HCT116 (cell line): ENCODE measurements at regions of chr3 and their contacts with region 1.

Region 1: GRCh38 chr3:159988617-159989271 is at the start of gene IL12A:
- DNase-seq: peak; percentile 52
- ATAC-seq: peak; percentile 95
- H3K4me3 ChIP-seq: peak within 1 kb of the TSS; percentile 69 to 73
- H3K27ac ChIP-seq: no peak within 1 kb of the TSS; the same call in 1 of the 2 replicates
- H3K4me1 ChIP-seq: peaks cover 4 to 24% of the 10 kb centered on the region in 2 experiments; a peak in 3 of 4 replicates
- H3K27me3 ChIP-seq: no peaks in the 10 kb centered on the region
- CTCF ChIP-seq: peak; percentile 74 to 95 (median 93); a peak in 5 of 6 replicates
- POLR2A ChIP-seq: no peak
- RAD21 ChIP-seq: peak; percentile 56
- total RNA-seq, gene IL12A: 2.8 TPM

Region 2: DNA sequence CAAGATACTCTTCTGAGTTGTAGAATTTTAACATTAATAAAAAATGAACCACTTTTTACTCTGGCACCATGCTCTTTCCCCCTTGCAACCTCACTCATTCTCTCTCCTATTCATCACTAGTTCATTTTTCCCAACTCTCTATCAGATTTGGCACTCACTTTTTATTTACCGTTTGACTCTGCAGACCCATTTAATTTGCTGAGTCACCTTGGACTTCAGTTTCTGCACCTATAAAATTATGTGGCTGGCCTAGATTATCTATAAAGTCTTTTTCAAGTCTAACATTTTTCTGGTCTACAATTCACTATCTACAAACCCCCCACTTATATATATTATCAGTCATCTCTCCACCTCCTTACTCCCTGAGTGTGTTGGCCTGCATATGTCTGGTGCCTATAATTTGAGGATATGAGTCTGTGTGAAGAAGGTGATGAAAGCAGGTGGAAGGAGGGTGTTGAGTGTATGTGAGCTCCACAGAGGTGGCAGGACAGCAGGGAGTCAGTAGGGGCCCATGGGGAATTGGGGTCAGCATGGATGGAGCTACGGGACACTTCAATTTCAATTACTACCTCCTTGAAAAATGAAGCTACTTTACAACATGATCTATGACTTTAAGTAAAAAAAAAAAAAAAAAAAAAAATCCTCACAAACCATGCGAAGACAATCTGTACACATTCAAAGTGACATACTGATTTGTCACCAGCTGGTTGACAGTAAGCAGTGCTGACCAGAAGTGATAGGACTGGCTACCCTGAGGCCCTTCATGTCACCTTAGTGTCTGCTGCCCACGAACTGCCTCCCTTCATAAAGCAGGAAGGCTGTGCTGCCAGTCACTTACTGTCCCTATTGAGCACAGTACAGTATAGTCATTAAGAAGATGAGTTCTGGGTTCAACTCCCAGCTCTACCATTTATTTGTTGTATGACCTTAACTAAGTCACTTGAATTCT is 334.3 kb before region 1 on chr3:
- CTCF ChIA-PET with region 1: no interaction called
- POLR2A ChIA-PET with region 1: no interaction called
- RAD21 ChIA-PET with region 1: no interaction called
- intact Hi-C with region 1: no loop called
- DNase-seq: no peak
- ATAC-seq: no peak
- H3K4me3 ChIP-seq: no peak overlapping the region
- H3K27ac ChIP-seq: no peak overlapping the region
- H3K4me1 ChIP-seq: no peaks in the 10 kb centered on the region
- H3K27me3 ChIP-seq: no peaks in the 10 kb centered on the region
- CTCF ChIP-seq: no peak
- POLR2A ChIP-seq: no peak
- RAD21 ChIP-seq: no peak

Region 3: GRCh38 chr3:159751146-159751545 is 237.6 kb before region 1 on chr3:
- CTCF ChIA-PET with region 1: no interaction called
- POLR2A ChIA-PET with region 1: no interaction called
- RAD21 ChIA-PET with region 1: no interaction called
- intact Hi-C with region 1: no loop called
- DNase-seq: no peak
- ATAC-seq: no peak
- H3K4me3 ChIP-seq: no peak overlapping the region
- H3K27ac ChIP-seq: no peak overlapping the region
- H3K4me1 ChIP-seq: no peaks in the 10 kb centered on the region
- H3K27me3 ChIP-seq: no peaks in the 10 kb centered on the region
- CTCF ChIP-seq: no peak
- POLR2A ChIP-seq: no peak
- RAD21 ChIP-seq: no peak

Region 4: DNA sequence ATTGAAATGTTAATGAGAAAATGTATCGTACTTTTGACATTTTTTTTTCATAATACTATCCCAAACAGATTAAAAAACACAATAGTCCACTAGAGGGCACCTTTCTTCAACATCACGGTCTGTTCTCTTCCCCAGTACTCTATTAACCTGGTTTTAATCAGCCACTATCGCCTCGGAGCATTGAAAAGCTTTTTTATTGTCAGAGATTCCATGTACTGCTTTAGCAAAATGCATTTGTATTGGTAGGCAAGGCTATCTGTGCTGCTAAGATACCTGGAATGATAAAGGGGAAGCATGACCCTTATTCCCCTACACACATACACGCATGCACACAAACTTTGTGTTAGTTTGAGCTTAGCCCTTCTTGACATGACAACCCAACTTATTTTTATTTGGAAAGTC is 160.2 kb before region 1 on chr3:
- CTCF ChIA-PET with region 1: interaction called, 18 read pairs
- POLR2A ChIA-PET with region 1: no interaction called
- RAD21 ChIA-PET with region 1: no interaction called
- intact Hi-C with region 1: no loop called
- DNase-seq: peak; percentile 35
- ATAC-seq: peak; percentile 74
- H3K4me3 ChIP-seq: no peak overlapping the region
- H3K27ac ChIP-seq: no peak overlapping the region
- H3K4me1 ChIP-seq: peaks cover 30 to 39% of the 10 kb centered on the region in 2 experiments
- H3K27me3 ChIP-seq: no peaks in the 10 kb centered on the region
- CTCF ChIP-seq: peak; percentile 36 to 68 (median 55); a peak in 4 of 6 replicates
- POLR2A ChIP-seq: no peak
- RAD21 ChIP-seq: peak; percentile 70

Region 5: GRCh38 chr3:159884661-159885402 is 103.9 kb before region 1 on chr3:
- CTCF ChIA-PET with region 1: interaction called, 51 read pairs
- POLR2A ChIA-PET with region 1: interaction called, 3 read pairs
- RAD21 ChIA-PET with region 1: interaction called in 1 of 2 experiments, 3 read pairs
- intact Hi-C with region 1: loop called (anchors 5 kb)
- DNase-seq: no peak
- ATAC-seq: peak; percentile 86
- H3K4me3 ChIP-seq: no peak overlapping the region
- H3K27ac ChIP-seq: no peak overlapping the region
- H3K4me1 ChIP-seq: peaks cover 0 to 9% of the 10 kb centered on the region in 2 experiments; a peak in 2 of 4 replicates
- H3K27me3 ChIP-seq: no peaks in the 10 kb centered on the region
- CTCF ChIP-seq: peak; percentile 46 to 62 (median 59); a peak in 5 of 6 replicates
- POLR2A ChIP-seq: no peak
- RAD21 ChIP-seq: peak; percentile 73

Region 6: GRCh38 chr3:159929435-159930141 is 59.2 kb before region 1 on chr3:
- CTCF ChIA-PET with region 1: interaction called, 13 read pairs
- POLR2A ChIA-PET with region 1: no interaction called
- RAD21 ChIA-PET with region 1: no interaction called
- intact Hi-C with region 1: no loop called
- DNase-seq: no peak
- ATAC-seq: peak; percentile 59
- H3K4me3 ChIP-seq: no peak overlapping the region
- H3K27ac ChIP-seq: no peak overlapping the region
- H3K4me1 ChIP-seq: peaks cover 0 to 21% of the 10 kb centered on the region in 2 experiments; a peak in 2 of 4 replicates
- H3K27me3 ChIP-seq: no peaks in the 10 kb centered on the region
- CTCF ChIP-seq: peak; percentile 23 to 32 (median 26); a peak in 3 of 6 replicates
- POLR2A ChIP-seq: no peak
- RAD21 ChIP-seq: peak; percentile 44

Region 7: GRCh38 chr3:159960188-159961148 is 28.3 kb before region 1 on chr3:
- CTCF ChIA-PET with region 1: interaction called, 11 read pairs
- POLR2A ChIA-PET with region 1: no interaction called
- RAD21 ChIA-PET with region 1: no interaction called
- intact Hi-C with region 1: no loop called
- DNase-seq: no peak
- ATAC-seq: no peak
- H3K4me3 ChIP-seq: no peak overlapping the region
- H3K27ac ChIP-seq: no peak overlapping the region
- H3K4me1 ChIP-seq: peaks cover 4 to 10% of the 10 kb centered on the region in 2 experiments; a peak in 3 of 4 replicates
- H3K27me3 ChIP-seq: no peaks in the 10 kb centered on the region
- CTCF ChIP-seq: no peak
- POLR2A ChIP-seq: no peak
- RAD21 ChIP-seq: no peak

Region 8: GRCh38 chr3:159978353-159978752 is 10.4 kb before region 1 on chr3:
- CTCF ChIA-PET with region 1: interaction called, 19 read pairs
- POLR2A ChIA-PET with region 1: interaction called, 4 read pairs
- RAD21 ChIA-PET with region 1: no interaction called
- intact Hi-C with region 1: no loop called
- DNase-seq: no peak
- ATAC-seq: no peak
- H3K4me3 ChIP-seq: no peak overlapping the region
- H3K27ac ChIP-seq: no peak overlapping the region
- H3K4me1 ChIP-seq: no peaks in the 10 kb centered on the region
- H3K27me3 ChIP-seq: no peaks in the 10 kb centered on the region
- CTCF ChIP-seq: no peak
- POLR2A ChIP-seq: no peak
- RAD21 ChIP-seq: no peak

Region 9: GRCh38 chr3:160170409-160171370 is 181.9 kb after region 1 on chr3:
- CTCF ChIA-PET with region 1: no interaction called
- POLR2A ChIA-PET with region 1: no interaction called
- RAD21 ChIA-PET with region 1: no interaction called
- intact Hi-C with region 1: no loop called
- DNase-seq: no peak
- ATAC-seq: no peak
- H3K4me3 ChIP-seq: no peak overlapping the region
- H3K27ac ChIP-seq: no peak overlapping the region
- H3K4me1 ChIP-seq: 0 out of 4 replicates have a peak, but pooled peaks cover 0 to 3% of the 10 kb centered on the region in 2 experiments
- H3K27me3 ChIP-seq: no peaks in the 10 kb centered on the region
- CTCF ChIP-seq: no peak
- POLR2A ChIP-seq: no peak
- RAD21 ChIP-seq: no peak